ENCODE measurements at regions of chr1 and their contacts with region 1.

Region 1: DNA sequence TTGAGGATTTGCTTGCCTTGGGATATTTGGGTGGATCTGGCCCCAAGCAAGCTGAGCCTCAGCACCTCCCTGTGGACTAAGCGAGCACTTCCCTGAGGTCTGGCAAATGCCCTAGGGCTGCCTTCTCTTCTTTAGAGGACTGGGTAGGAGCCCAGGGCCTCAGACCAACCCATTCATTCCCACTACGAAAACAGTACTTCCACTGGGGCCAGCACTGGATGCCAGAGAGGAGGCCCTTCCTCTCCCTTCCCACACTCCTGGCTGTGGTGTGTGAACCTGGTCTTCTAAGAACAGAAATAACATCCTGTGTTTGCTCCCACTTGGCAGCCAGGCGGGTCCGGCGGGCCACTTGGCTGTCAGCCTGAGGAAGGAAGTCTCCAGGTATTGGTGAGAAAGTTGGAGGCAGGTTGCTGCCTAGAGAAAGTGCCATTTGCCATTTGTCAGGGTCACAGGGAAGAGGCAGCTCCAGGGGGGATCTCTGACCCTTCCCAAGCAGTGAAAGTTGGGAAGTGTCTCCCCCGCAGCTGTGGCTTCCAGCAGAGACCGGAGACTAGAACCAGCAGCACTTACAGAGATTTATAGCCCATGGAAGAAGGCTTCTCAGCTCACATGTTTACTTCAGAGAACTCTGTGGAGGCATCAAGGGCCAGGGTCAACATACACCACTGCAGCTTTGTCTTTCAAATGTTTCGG is 323.5 kb downstream of the SIPA1L2 start:
- DNase-seq: peak; percentile 47 to 60
- ATAC-seq: peak; percentile 64 to 84 (median 74)
- H3K4me3 ChIP-seq: no peak overlapping the region
- H3K27ac ChIP-seq: peak overlapping the region; percentile 36
- H3K4me1 ChIP-seq: peaks cover 13% of the 10 kb centered on the region
- H3K27me3 ChIP-seq: peaks cover 0 to 2% (median 0%) of the 10 kb centered on the region in 3 donors
- CTCF ChIP-seq: peak; percentile 44

Region 2: GRCh38 chr1:232283864-232284263 is 22.6 kb before region 1 on chr1:
- intact Hi-C with region 1: loop called in 1 of 2 experiments (anchors 1 kb)
- DNase-seq: no peak
- ATAC-seq: no peak
- H3K4me3 ChIP-seq: no peak overlapping the region
- H3K27ac ChIP-seq: no peak overlapping the region
- H3K4me1 ChIP-seq: peaks cover 3% of the 10 kb centered on the region
- H3K27me3 ChIP-seq: no peaks in the 10 kb centered on the region
- CTCF ChIP-seq: no peak

Measured in psoas muscle (tissue), 8 donors.